GM10248 (cell line): ENCODE measurements at regions of chr13 and their contacts with region 1.

Region 1: DNA sequence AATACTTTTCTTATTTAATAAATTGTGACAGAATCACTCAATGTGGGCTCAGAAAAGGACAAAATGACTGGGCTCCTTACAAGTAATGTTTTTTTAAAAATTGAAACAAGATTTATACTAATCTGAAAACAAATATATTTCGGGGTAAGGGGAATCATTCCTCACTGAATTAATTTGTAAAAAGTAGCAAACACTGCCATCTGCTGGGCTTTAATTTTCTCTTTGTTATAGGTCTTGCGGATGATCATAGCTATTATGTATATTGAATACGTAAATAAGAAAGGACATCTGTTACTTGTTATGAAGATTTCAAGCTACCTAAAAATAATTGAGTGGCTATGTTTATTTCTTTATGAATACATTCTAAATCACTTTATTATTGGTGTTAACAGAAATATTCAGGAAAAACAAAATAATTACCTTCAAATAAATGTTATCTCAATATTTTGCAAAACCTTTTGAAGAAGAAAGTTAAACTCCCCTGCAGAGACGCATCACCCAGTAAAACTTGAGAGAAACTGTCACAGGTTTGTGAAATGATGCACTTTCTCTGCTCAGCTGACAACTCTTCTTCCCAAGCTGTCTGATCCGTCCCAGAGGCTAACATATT is 17.8 kb upstream of the ENOX1 start:
- DNase-seq: peak; percentile 43
- CTCF ChIP-seq: peak; percentile 44

Region 2: GRCh38 chr13:43787997-43788396 is 16.6 kb before region 1 on chr13:
- CTCF ChIA-PET with region 1: interaction called, 11 read pairs
- POLR2A ChIA-PET with region 1: no interaction called
- DNase-seq: peak; percentile 18
- CTCF ChIP-seq: no peak

Region 3: GRCh38 chr13:43815204-43815603 is 10.6 kb after region 1 on chr13:
- CTCF ChIA-PET with region 1: interaction called, 11 read pairs
- POLR2A ChIA-PET with region 1: no interaction called
- DNase-seq: no peak
- CTCF ChIP-seq: no peak

Region 4: GRCh38 chr13:43838594-43839308 is 34.2 kb after region 1 on chr13:
- CTCF ChIA-PET with region 1: no interaction called
- POLR2A ChIA-PET with region 1: no interaction called
- DNase-seq: no peak
- CTCF ChIP-seq: no peak

Region 5: GRCh38 chr13:43850873-43851272 is 46.3 kb after region 1 on chr13:
- CTCF ChIA-PET with region 1: no interaction called
- POLR2A ChIA-PET with region 1: no interaction called
- DNase-seq: no peak
- CTCF ChIP-seq: no peak